ENCODE measurements at regions of chr14 and their contacts with region 1.

Region 1: DNA sequence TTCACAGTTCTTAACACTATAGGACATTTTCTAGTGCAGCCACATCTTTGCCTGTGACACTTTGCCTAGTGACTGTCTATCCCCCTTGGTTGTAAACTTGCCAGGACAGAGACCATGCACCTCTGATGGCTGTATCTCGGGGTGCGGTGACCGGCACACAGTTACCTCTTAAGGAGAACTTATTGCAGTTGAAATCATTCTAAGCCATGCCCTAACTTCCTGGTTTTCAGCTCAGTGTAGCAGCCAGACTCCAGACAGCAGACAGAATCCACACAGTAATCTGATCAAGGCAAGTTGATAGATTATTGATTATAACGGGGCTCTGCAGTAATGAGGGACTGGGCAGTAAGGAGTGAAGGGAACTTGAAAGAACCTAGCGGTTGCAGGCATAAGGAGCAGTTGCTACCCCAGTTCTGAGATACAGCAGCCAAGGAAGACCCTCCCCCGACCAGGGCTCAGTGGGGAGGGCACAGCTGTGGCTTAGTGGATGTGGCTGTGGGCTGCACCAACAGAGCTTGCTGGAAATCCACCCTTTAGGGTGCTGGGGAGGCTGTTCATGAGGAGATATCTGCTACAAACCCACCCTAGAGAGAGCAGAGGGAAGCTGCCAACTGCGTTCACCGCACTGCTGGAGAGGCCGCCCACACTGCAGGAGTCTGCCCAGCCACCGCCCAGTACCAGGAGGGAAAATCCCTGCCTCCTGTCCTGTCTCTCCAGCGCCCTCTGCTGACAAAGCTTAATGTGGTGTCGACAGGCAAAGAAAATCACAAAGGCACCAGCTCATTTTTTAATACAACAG is 58.2 kb upstream of the BEGAIN start:
- DNase-seq: peak; percentile 76
- ATAC-seq: peak; percentile 83
- H3K4me3 ChIP-seq: no peak overlapping the region
- H3K27ac ChIP-seq: no peak overlapping the region
- H3K4me1 ChIP-seq: peaks cover 8% of the 10 kb centered on the region; the same call in 1 of the 2 replicates
- H3K27me3 ChIP-seq: peaks cover 18% of the 10 kb centered on the region
- CTCF ChIP-seq: peak; percentile 82
- POLR2A ChIP-seq: no peak
- RAD21 ChIP-seq: peak; percentile 77

Region 2: GRCh38 chr14:100417466-100417865 is 227.9 kb before region 1 on chr14:
- CTCF ChIA-PET with region 1: interaction called, 22 read pairs
- POLR2A ChIA-PET with region 1: interaction called, 6 read pairs
- dilution Hi-C with region 1: no loop called
- in situ Hi-C with region 1: loop called (anchors 10 kb)
- intact Hi-C with region 1: loop called (anchors 1 kb)
- DNase-seq: peak; percentile 97
- ATAC-seq: peak; percentile 97
- H3K4me3 ChIP-seq: no peak overlapping the region
- H3K27ac ChIP-seq: 0 out of 2 replicates have a peak overlapping the region, but pooled peaks have one; percentile 5
- H3K4me1 ChIP-seq: peaks cover 10% of the 10 kb centered on the region
- H3K27me3 ChIP-seq: no peaks in the 10 kb centered on the region
- CTCF ChIP-seq: peak; percentile 96
- POLR2A ChIP-seq: peak; percentile 65
- RAD21 ChIP-seq: peak; percentile 98

Region 3: DNA sequence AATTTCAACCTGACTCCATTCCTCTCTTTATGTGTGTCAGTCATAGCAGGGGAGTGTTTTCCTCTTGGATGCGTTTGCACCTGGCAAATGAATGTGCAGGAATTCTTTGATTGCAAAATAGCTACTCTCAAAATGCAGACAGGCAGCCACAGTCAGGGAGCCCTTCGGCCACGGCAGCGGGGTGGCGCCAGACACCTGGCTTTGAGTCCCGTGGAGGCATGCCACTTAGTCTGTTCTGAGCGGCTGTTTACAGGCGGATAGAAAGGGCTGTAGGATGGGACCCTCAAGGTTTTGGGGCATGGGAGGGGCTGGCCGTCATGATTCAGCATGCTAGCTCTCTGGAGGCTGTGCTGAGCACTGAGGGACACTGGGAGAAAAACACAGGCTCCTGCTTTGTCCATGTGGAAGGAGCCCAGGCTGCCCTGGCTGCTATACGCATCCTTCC is 205.2 kb before region 1 on chr14:
- CTCF ChIA-PET with region 1: interaction called, 15 read pairs
- POLR2A ChIA-PET with region 1: no interaction called
- dilution Hi-C with region 1: no loop called
- in situ Hi-C with region 1: no loop called
- intact Hi-C with region 1: no loop called
- DNase-seq: peak; percentile 58
- ATAC-seq: peak; percentile 52
- H3K4me3 ChIP-seq: no peak overlapping the region
- H3K27ac ChIP-seq: no peak overlapping the region
- H3K4me1 ChIP-seq: peaks cover 31% of the 10 kb centered on the region
- H3K27me3 ChIP-seq: no peaks in the 10 kb centered on the region
- CTCF ChIP-seq: peak; percentile 72
- POLR2A ChIP-seq: no peak
- RAD21 ChIP-seq: peak; percentile 78

Region 4: DNA sequence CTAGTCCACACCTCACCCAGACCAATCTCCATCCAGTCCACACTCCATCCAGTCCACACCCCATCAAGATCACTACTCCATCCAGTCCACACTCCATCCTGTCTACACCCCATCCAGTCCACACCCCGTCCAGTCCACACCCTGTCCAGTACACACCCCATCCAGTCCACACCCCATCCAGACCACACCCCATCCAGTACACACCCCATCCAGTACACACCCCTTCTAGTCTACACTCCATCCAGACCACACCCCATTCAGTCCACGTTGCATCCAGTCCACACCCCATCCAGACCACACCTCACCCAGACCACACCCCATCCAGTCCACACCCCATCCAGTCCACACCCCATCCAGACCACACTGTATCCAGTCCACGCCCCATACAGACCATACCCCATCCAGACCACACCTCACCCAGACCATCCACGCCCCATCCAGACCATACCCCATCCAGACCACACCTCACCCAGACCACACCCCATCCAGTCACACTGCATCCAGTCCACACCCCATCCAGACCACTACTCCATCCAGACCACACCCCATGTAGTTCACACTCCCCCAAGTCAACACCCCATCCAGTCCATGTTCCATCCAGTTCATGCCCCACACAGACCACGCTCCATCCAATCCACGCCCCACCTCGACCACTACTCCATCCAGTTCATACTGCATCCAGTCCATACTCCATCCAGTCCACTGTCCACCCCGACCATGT is 374.8 kb after region 1 on chr14:
- CTCF ChIA-PET with region 1: no interaction called
- POLR2A ChIA-PET with region 1: no interaction called
- dilution Hi-C with region 1: no loop called
- in situ Hi-C with region 1: no loop called
- intact Hi-C with region 1: no loop called
- DNase-seq: no peak
- ATAC-seq: peak; percentile 4; the same call in 1 of the 2 replicates
- H3K4me3 ChIP-seq: no peak overlapping the region
- H3K27ac ChIP-seq: no peak overlapping the region
- H3K4me1 ChIP-seq: no peaks in the 10 kb centered on the region
- H3K27me3 ChIP-seq: no peaks in the 10 kb centered on the region
- CTCF ChIP-seq: no peak
- POLR2A ChIP-seq: no peak
- RAD21 ChIP-seq: no peak